ENCODE measurements at regions of chr6 and their contacts with region 1.

Region 1: GRCh38 chr6:105431226-105431625 is 28.3 kb upstream of the PREP start:
- DNase-seq: peak; percentile 34
- CTCF ChIP-seq: peak; percentile 71

Region 2: DNA sequence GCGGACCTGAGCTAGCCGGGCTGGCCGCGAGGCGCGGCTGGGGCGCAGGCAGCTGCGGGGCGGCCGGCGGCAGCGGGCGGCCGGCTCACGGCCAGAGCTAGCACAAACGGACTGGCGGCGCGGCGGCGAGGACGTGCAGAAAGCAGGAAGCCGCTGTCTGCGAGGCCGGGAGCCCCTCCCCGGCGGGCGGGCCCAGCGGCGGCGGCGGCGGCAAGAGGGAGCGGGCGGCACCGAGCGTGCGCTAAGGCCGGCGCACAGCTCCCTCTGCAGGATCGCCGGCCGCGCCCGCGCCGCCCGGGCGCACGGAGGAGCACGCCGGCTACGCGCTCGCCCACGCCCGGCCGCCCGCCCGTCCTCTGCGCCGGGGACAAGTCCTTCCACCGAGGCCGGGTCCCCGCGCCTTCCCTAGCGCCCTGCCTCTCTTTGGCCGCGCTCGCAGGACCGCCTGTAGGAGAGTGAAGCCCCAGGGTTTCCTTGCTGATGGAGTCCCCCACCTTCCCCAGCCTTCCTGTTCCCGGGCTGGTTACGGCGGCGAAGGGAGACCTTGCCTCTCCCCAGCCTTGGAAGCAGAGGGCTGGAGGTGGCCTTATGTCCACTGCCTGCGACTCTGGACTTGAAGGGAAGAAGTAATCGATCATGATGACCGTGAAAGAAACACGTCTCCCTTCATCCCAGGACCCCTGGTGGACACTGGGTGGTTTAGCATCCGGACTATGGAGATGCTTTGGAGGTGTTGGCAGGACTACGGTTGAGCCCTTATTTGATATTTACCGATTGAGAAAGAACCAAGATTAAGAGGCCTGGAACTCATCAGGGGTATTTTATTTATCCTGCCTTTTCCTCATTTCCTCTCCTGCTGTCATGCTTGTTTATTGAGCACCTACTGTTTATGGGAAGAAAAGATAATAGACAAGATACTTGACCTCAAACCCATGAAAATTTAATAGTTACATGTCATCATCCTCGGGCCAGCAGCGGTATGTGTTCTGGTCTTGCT is 28.0 kb before region 1 on chr6 and contains the start of gene PREP:
- CTCF ChIA-PET with region 1: interaction called, 25 read pairs
- POLR2A ChIA-PET with region 1: no interaction called
- DNase-seq: peak; percentile 93
- CTCF ChIP-seq: peak; percentile 71

Region 3: DNA sequence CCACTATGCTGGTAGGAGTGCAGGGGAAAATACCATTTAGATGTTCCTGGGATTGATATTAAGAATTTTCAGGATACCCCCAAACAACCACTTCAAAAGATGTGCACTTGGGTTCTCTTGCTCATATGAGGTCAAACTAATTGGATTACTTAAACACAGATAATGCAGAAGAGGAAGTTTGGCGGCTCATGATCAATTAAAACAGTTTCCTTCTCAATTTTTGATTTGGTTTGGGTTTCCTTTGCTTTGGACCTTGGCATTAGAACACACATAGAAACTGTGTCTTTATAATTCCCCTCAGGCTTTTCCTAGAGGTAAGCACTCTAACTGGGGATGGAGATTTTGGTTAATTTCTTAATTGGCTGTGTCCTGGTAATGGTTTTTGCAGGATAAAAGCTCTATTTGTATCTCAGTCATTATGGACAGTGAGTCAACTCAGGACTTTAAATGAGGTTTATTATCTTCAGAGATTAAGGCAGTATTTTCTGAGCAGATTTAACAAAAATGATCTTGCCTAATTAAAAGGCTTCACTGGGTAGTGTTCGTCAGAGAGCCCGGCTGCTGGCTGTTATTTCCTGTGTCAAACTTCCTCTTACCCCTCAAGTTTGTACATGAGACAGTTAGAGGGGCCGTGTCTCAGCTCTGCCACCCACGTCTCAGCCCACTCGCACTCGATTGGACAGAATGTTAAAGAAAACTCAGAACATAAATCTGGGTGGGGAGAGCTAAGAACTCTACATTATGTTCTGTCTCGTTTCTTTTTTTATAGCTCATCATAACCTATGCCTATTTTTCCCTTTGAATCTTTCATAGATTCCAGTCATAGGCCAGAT is 21.9 kb after region 1 on chr6:
- CTCF ChIA-PET with region 1: interaction called, 14 read pairs
- POLR2A ChIA-PET with region 1: no interaction called
- DNase-seq: peak; percentile 37
- CTCF ChIP-seq: no peak

Region 4: GRCh38 chr6:105835373-105835772 is 404.1 kb after region 1 on chr6:
- CTCF ChIA-PET with region 1: interaction called, 11 read pairs
- POLR2A ChIA-PET with region 1: no interaction called
- DNase-seq: no peak
- CTCF ChIP-seq: peak; percentile 17

Measured in GM10248 (cell line).